Ovary (tissue), 10 donors: ENCODE measurements at regions of chr16 and their contacts with region 1.

Region 1: GRCh38 chr16:67928561-67929364 is 2.9 kb downstream of the CTRL start:
- DNase-seq: peak; percentile 60 to 80 (median 75)
- H3K4me3 ChIP-seq: no peak overlapping the region
- H3K27ac ChIP-seq: no peak overlapping the region
- H3K4me1 ChIP-seq: peaks cover 7% of the 10 kb centered on the region
- H3K27me3 ChIP-seq: no peaks in the 10 kb centered on the region
- CTCF ChIP-seq: peak; percentile 64 to 74 (median 70)
- EP300 ChIP-seq: no peak
- POLR2A ChIP-seq: no peak

Region 2: GRCh38 chr16:67521095-67521804 is 407.5 kb before region 1 on chr16:
- intact Hi-C with region 1: loop called in 1 of 4 experiments (anchors 5 kb)
- DNase-seq: peak; percentile 90 to 97 (median 95)
- H3K4me3 ChIP-seq: peak overlapping the region; percentile 42
- H3K27ac ChIP-seq: peak overlapping the region; percentile 54 to 88
- H3K4me1 ChIP-seq: no peaks in the 10 kb centered on the region
- H3K27me3 ChIP-seq: no peaks in the 10 kb centered on the region
- CTCF ChIP-seq: peak; percentile 51 to 96 (median 94)
- EP300 ChIP-seq: no peak
- POLR2A ChIP-seq: no peak

Region 3: GRCh38 chr16:67816240-67817031 is 112.3 kb before region 1 on chr16:
- intact Hi-C with region 1: loop called in 1 of 4 experiments (anchors 5 kb)
- DNase-seq: peak; percentile 81 to 92 (median 88)
- H3K4me3 ChIP-seq: no peak overlapping the region
- H3K27ac ChIP-seq: no peak overlapping the region
- H3K4me1 ChIP-seq: no peaks in the 10 kb centered on the region
- H3K27me3 ChIP-seq: no peaks in the 10 kb centered on the region
- CTCF ChIP-seq: peak; percentile 98 to 100 (median 99)
- EP300 ChIP-seq: no peak
- POLR2A ChIP-seq: no peak

Region 4: DNA sequence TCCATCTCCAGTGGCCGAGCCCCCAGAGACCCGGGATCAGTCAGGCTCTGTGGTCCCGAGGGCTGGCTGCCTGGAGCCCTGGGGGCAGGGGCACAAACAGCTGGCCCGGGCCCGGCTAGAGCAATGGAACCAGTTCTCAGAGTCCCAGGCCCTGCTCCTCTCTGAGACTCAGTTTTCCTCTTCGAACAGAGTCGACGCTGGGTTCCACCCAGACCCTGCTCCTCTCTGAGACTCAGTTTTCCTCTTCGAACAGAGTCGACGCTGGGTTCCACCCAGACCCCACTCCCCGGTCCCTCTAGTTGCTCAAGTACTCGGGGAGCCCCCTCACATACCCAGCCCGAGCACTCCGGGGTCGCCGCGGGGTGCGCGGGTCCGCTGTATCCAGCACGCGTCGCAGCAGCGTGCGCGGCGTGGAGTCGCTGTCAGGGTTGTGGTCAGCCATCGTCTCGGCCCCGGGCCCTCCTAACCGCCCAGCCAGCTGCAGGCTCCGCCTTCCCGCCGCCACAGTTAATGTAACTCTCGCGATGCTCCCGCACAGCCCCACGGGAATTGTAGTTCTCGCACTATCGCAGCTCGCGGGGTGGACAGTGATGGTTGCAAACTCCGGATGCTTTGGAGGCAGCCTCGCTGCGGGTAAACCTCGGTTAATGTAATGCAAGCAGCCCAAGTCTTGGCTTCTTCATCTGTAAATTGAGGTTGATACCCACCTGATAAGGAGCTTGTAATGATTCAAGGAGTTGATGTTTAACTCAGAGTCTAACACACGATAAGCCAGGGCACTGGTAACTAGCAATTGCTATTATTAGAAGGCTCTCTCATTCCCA is 95.1 kb before region 1 on chr16:
- intact Hi-C with region 1: no loop called
- DNase-seq: peak; percentile 90 to 96 (median 95)
- H3K4me3 ChIP-seq: peak overlapping the region; percentile 52
- H3K27ac ChIP-seq: peak overlapping the region in 1 of 2 donors; percentile 59
- H3K4me1 ChIP-seq: peaks cover 4% of the 10 kb centered on the region
- H3K27me3 ChIP-seq: no peaks in the 10 kb centered on the region
- CTCF ChIP-seq: no peak
- EP300 ChIP-seq: no peak
- POLR2A ChIP-seq: peak; percentile 59

Region 5: DNA sequence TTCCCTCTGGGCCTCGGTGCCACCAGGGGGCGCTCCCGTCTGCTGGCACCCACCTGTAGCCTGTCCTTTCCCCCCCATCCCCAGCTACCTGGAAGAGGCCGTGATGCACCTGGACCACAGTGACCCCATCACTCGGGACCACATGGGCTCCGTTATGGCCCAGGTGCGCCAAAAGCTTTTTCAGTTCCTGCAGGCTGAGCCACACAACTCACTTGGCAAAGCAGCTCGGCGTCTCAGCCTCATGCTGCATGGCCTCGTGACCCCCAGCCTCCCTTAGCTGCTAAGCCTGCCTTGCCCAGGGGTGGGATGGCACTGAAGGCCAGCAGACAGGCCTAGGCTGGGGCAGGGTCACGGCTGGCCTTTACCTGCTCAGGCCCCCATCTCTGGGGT is 44.9 kb before region 1 on chr16:
- intact Hi-C with region 1: loop called in 3 of 4 experiments (anchors 5 kb)
- DNase-seq: peak; percentile 49 to 76 (median 71)
- H3K4me3 ChIP-seq: no peak overlapping the region
- H3K27ac ChIP-seq: peak overlapping the region in 1 of 2 donors; percentile 11
- H3K4me1 ChIP-seq: peaks cover 6% of the 10 kb centered on the region
- H3K27me3 ChIP-seq: no peaks in the 10 kb centered on the region
- CTCF ChIP-seq: peak; percentile 70 to 76 (median 74)
- EP300 ChIP-seq: no peak
- POLR2A ChIP-seq: no peak